ENCODE measurements at regions of chr3 and their contacts with region 1.

Region 1: GRCh38 chr3:111846717-111847116 is 12.3 kb upstream of the PHLDB2 start:
- DNase-seq: no peak
- ATAC-seq: peak; percentile 26 to 78 (median 58)
- H3K4me3 ChIP-seq: no peak overlapping the region
- H3K27ac ChIP-seq: peak overlapping the region in 2 of 4 donors; percentile 10 to 42
- H3K4me1 ChIP-seq: no peaks in the 10 kb centered on the region
- H3K27me3 ChIP-seq: no peaks in the 10 kb centered on the region
- CTCF ChIP-seq: no peak

Region 2: GRCh38 chr3:111723293-111724215 is 123.2 kb before region 1 on chr3:
- intact Hi-C with region 1: loop called in 1 of 3 experiments (anchors 10 kb)
- DNase-seq: no peak
- ATAC-seq: no peak
- H3K4me3 ChIP-seq: no peak overlapping the region
- H3K27ac ChIP-seq: no peak overlapping the region
- H3K4me1 ChIP-seq: no peaks in the 10 kb centered on the region
- H3K27me3 ChIP-seq: no peaks in the 10 kb centered on the region
- CTCF ChIP-seq: no peak

Region 3: GRCh38 chr3:112086076-112086854 is 239.5 kb after region 1 on chr3 and contains the start of gene C3orf52:
- intact Hi-C with region 1: no loop called
- DNase-seq: peak; percentile 90 to 96 (median 93)
- ATAC-seq: peak; percentile 84 to 95 (median 88)
- H3K4me3 ChIP-seq: peak within 1 kb of the TSS; percentile 49 to 71 (median 54)
- H3K27ac ChIP-seq: peak within 1 kb of the TSS; percentile 81 to 89 (median 86)
- H3K4me1 ChIP-seq: peaks cover 0 to 6% (median 4%) of the 10 kb centered on the region in 3 donors
- H3K27me3 ChIP-seq: no peaks in the 10 kb centered on the region
- CTCF ChIP-seq: no peak
- total RNA-seq, gene C3orf52: 16.1 to 51.7 (median 24.9) TPM